GM10248 (cell line): ENCODE measurements at regions of chr9 and their contacts with region 1.

Region 1: DNA sequence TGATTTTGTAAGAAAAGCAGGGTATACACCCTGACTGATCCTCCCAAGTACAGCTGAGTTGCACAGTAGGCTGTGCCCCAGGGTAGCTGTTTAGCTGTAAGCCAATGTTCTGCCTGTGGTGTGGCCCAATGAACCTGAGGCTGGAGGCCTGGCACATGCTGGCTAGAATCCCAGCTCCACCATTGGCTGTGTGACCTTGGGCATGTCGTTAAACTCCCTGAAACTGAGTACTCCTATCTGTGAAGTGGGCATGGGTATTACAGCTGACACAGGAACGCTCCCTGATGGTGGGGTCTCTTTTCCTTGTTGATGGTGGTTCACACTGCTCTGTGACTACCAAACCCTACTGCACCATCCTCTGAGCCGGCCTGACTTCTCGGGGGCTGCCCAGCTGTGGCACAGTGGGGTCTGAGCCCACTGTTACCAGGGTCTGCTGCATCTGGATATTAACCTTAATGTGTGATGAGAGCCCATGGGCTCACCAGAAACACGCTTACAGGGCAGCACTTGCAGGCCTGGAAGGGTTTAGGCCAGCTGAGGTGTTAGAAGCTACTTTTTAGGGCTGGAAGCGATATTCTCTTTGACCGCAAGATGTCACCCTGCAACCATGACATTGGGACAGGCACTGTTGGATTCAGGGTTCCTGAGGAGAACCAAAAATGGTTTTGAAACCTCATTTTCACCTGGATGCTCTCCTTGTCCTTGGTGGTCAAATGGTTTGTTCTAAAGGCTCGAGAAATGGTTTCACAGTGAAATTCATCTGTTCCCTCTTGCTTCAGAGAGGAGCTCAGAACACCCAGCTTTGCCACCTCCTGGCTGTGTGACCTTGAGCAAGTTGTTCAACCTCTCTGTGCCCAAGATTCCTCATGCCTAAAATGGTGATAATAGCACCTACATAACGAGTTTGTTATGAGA is 6.8 kb upstream of the GADD45G start:
- DNase-seq: peak; percentile 57
- CTCF ChIP-seq: peak; percentile 68

Region 2: GRCh38 chr9:89564352-89564878 is 33.6 kb before region 1 on chr9:
- CTCF ChIA-PET with region 1: interaction called, 10 read pairs
- POLR2A ChIA-PET with region 1: no interaction called
- DNase-seq: peak; percentile 87
- CTCF ChIP-seq: peak; percentile 37

Region 3: DNA sequence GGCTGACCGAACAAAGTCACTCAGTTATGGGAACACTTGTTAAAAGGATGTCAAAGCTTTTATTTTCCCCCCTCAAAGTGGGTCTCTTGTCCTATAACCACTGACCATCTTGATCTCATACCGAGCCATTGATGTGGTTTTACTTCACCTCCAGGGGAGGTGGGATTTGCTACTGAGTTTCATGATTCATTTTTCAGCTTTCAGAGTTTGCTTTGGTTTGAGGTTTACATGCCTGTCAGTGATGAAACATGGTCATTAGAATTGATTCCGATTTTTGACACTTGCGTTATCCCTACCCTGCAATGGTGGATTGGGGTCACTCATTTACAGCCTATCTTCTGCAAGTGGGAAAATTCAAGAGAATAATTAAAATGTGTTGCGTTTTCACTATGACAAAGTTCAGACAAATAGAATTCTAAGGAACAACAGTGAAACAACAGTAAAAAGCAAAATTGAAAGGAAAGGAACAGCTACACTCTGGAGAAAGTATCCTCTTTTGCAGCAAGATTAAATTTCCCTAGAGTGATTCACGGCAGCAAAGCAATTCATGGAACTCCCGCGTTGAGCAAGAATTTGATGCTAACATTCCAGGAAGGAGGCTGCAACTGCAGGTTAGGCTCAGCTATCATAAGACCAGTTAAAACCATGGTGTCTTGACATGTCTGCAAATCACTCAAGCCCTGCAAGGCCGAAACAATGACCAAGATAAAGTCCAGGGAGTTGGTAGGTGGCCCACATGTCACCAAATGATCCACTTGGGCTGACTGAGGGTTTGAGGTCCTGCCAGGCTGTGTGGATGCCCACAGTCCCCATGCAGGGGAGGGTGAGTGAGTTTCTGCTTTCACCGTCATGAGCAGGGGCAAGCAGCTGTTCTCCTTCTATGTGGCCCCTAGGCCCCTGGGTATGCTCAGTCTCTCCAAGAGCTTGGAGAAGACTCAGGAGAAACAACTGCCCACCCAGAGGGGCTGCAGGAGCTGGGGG is 16.2 kb after region 1 on chr9:
- CTCF ChIA-PET with region 1: interaction called, 27 read pairs
- POLR2A ChIA-PET with region 1: no interaction called
- DNase-seq: no peak
- CTCF ChIP-seq: no peak

Region 4: GRCh38 chr9:90095682-90096081 is 497.7 kb after region 1 on chr9:
- CTCF ChIA-PET with region 1: interaction called, 298 read pairs
- POLR2A ChIA-PET with region 1: no interaction called
- DNase-seq: no peak
- CTCF ChIP-seq: no peak

Region 5: GRCh38 chr9:90142580-90142979 is 544.6 kb after region 1 on chr9:
- CTCF ChIA-PET with region 1: interaction called, 16 read pairs
- POLR2A ChIA-PET with region 1: no interaction called
- DNase-seq: peak; percentile 27
- CTCF ChIP-seq: peak; percentile 31